ENCODE measurements at regions of chr2 and their contacts with region 1.

Region 1: DNA sequence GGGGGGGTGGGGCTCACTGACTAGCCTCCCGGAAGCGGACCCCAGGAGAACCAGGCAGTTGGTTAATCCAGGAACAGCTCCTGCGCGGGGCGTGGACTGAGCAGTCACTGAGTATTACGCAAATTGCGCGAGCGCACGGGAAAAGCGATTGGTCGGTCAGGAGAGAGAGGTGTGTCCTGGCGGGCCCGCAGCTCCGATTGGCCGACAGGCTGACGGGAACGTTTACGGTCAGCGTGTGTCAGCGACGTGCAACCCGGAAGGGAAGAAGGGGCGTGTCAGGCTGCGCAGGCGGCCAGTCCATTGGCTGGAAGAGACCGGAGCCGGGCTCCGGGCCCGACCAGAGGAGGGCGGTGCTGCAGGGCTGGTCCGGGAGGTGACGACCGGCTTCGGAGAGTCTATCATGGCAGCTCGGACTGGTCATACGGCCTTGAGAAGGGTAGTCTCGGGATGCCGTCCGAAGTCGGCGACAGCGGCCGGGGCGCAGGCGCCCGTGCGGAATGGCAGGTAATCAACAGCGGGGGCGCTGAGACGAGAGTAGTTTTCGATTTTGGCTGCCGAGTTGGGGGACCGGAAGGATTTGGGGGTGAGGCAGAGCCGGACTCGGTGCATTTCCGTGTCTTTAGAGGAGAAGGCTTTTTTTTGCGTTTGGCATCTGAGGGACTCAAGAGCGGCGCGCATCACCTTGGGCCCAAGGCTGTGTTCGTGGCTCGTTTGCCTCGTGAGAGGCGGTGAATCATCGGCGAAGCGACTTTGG is at the start of gene COQ10B:
- H3K4me3 Mint-ChIP-seq: peak within 1 kb of the TSS; percentile 96
- H3K27ac Mint-ChIP-seq: peak within 1 kb of the TSS; percentile 96
- H3K4me1 Mint-ChIP-seq: peaks cover 41% of the 10 kb centered on the region
- H3K27me3 Mint-ChIP-seq: no peaks in the 10 kb centered on the region

Region 2: GRCh38 chr2:197425550-197425949 is 27.8 kb before region 1 on chr2:
- intact Hi-C with region 1: loop called (anchors 5 kb)
- H3K4me3 Mint-ChIP-seq: no peak overlapping the region
- H3K27ac Mint-ChIP-seq: no peak overlapping the region
- H3K4me1 Mint-ChIP-seq: peaks cover 39% of the 10 kb centered on the region
- H3K27me3 Mint-ChIP-seq: no peaks in the 10 kb centered on the region

Region 3: GRCh38 chr2:197434541-197435513 is 18.5 kb before region 1 on chr2 and contains the start of gene SF3B1:
- intact Hi-C with region 1: loop called (anchors 1 kb)
- H3K4me3 Mint-ChIP-seq: peak within 1 kb of the TSS; percentile 96
- H3K27ac Mint-ChIP-seq: peak within 1 kb of the TSS; percentile 99
- H3K4me1 Mint-ChIP-seq: peaks cover 42% of the 10 kb centered on the region
- H3K27me3 Mint-ChIP-seq: no peaks in the 10 kb centered on the region

Region 4: GRCh38 chr2:197487385-197487784 is 34.0 kb after region 1 on chr2:
- intact Hi-C with region 1: no loop called
- H3K4me3 Mint-ChIP-seq: no peak overlapping the region
- H3K27ac Mint-ChIP-seq: no peak overlapping the region
- H3K4me1 Mint-ChIP-seq: no peaks in the 10 kb centered on the region
- H3K27me3 Mint-ChIP-seq: no peaks in the 10 kb centered on the region

Measured in dendritic cell treated with granulocyte-macrophage colony-stimulating factor and Interleukin-4, amounts not matched to agents 40 ng/mL and 50 ng/mL, for 4 days (primary cell).